ENCODE measurements at regions of chr4 and their contacts with region 1.

Region 1: GRCh38 chr4:139030614-139031235 is 15.1 kb downstream of the NOCT start:
- DNase-seq: peak; percentile 35 to 92 (median 70)
- ATAC-seq: peak; percentile 62 to 81 (median 75)
- H3K4me3 ChIP-seq: no peak overlapping the region
- H3K4me3 Mint-ChIP-seq: no peak overlapping the region
- H3K27ac ChIP-seq: no peak overlapping the region
- H3K27ac Mint-ChIP-seq: no peak overlapping the region
- H3K4me1 ChIP-seq: peaks cover 2 to 4% of the 10 kb centered on the region in 2 experiments
- H3K4me1 Mint-ChIP-seq: peaks cover 7 to 11% (median 9%) of the 10 kb centered on the region in 3 donors
- H3K27me3 ChIP-seq: no peaks in the 10 kb centered on the region
- H3K27me3 Mint-ChIP-seq: no peaks in the 10 kb centered on the region

Region 2: GRCh38 chr4:139015269-139015947 is 15.3 kb before region 1 on chr4 and contains the start of gene NOCT:
- CTCF ChIA-PET with region 1: interaction called, 7 to 31 read pairs
- POLR2A ChIA-PET with region 1: interaction called in 1 of 2 experiments, 4 read pairs
- DNase-seq: peak; percentile 72 to 96 (median 89)
- ATAC-seq: peak; percentile 91 to 97 (median 96)
- H3K4me3 ChIP-seq: peak within 1 kb of the TSS; percentile 68 to 71
- H3K4me3 Mint-ChIP-seq: peak within 1 kb of the TSS; percentile 82 to 94 (median 86)
- H3K27ac ChIP-seq: peak within 1 kb of the TSS; percentile 89
- H3K27ac Mint-ChIP-seq: peak within 1 kb of the TSS; percentile 92 to 96
- H3K4me1 ChIP-seq: peaks cover 10 to 16% of the 10 kb centered on the region in 2 experiments
- H3K4me1 Mint-ChIP-seq: peaks cover 19 to 26% (median 23%) of the 10 kb centered on the region in 3 donors
- H3K27me3 ChIP-seq: no peaks in the 10 kb centered on the region
- H3K27me3 Mint-ChIP-seq: no peaks in the 10 kb centered on the region
- total RNA-seq, gene NOCT: 2.4 to 19.3 (median 3.1) TPM

Region 3: DNA sequence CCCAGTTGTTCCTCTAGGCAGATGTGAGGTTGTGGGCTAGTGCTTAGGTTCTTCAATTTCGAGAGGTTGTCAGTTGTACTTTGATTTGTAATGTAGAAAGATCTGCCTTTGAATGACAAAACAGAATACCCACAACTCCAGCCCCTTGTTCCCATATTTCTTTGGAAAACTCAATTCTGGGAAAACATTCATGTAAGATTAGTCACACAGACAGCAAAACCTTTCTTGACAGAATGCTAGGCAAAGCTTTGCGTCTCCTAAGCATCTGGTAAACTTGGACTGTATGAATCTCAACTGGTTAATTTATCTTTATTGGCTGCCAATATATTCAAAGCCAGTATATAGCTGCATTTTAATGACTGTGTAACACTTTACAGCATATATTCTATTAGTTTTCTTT is 19.7 kb after region 1 on chr4:
- CTCF ChIA-PET with region 1: interaction called, 4 to 11 read pairs
- POLR2A ChIA-PET with region 1: interaction called in 1 of 2 experiments, 4 read pairs
- DNase-seq: no peak
- ATAC-seq: no peak
- H3K4me3 ChIP-seq: no peak overlapping the region
- H3K4me3 Mint-ChIP-seq: no peak overlapping the region
- H3K27ac ChIP-seq: no peak overlapping the region
- H3K27ac Mint-ChIP-seq: no peak overlapping the region
- H3K4me1 ChIP-seq: no peaks in the 10 kb centered on the region
- H3K4me1 Mint-ChIP-seq: peaks cover 8 to 19% (median 13%) of the 10 kb centered on the region in 3 donors
- H3K27me3 ChIP-seq: no peaks in the 10 kb centered on the region
- H3K27me3 Mint-ChIP-seq: no peaks in the 10 kb centered on the region

Region 4: DNA sequence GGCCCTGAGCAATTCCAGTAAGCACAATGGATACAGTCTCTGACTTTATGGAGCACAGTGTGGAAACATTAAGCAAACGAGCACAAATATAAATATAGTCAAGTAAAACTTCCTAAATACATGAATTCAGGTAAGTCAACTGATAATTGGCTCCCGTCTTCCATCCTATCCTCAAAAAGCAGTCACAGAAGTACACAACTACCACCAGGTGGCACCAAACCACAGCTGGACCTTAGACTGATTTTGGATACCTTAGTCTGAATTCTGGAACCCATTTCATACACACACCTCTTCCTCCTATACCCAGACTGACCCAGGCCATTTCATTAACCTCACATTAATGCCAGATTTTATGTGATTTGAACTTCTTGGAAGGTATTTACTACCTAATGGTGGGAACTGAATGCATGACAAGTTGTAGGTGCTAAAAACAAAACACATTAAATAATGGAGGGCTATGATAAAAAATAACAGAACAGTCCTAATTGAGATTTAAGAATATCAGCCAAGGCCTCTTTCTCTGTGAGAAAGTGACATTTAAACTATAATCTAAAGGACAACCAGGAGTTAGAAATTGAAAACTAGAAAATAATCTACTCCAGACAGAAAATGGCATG is 68.7 kb after region 1 on chr4:
- CTCF ChIA-PET with region 1: interaction called, 9 to 13 read pairs
- POLR2A ChIA-PET with region 1: no interaction called
- DNase-seq: peak; percentile 33 to 91 (median 63)
- ATAC-seq: peak; percentile 71 to 82 (median 78)
- H3K4me3 ChIP-seq: no peak overlapping the region
- H3K4me3 Mint-ChIP-seq: no peak overlapping the region
- H3K27ac ChIP-seq: no peak overlapping the region
- H3K27ac Mint-ChIP-seq: no peak overlapping the region
- H3K4me1 ChIP-seq: no peaks in the 10 kb centered on the region
- H3K4me1 Mint-ChIP-seq: peaks cover 2 to 9% (median 4%) of the 10 kb centered on the region in 3 donors
- H3K27me3 ChIP-seq: no peaks in the 10 kb centered on the region
- H3K27me3 Mint-ChIP-seq: no peaks in the 10 kb centered on the region

Region 5: DNA sequence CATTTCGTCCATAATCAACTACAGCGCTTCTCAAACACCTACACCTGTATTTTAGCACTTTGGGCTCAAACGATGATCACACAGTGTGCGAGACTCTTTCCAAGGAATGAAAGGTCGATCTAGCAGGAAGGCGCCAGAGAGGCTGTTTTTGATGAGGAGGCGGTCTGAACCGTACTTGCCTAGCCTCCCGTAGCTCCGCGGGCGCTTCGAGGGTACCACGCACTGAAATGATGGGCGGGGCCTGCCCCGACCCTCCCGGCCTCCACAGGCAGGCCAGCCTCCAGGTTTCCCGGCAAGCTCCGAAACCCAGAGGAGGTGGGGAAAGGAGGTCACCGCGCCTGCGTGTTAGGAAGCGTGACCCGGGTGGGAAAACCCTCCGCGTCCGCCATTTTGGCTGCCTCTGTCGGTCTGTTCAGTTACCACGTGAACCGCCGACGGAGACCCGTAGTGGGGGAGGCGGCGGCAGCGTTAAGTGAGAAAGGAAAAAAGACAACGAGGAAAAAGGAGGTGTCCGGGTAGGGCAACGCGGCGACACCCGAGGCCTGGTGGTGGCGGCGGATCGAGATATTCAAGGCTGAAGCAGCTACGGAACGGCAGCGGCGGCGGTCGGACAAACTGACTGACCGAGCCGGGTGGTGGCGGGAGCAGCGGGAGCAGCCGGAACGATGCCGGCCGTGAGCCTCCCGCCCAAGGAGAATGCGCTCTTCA is 270.5 kb after region 1 on chr4 and contains the start of gene NAA15:
- CTCF ChIA-PET with region 1: interaction called, 5 to 59 read pairs
- POLR2A ChIA-PET with region 1: no interaction called
- DNase-seq: peak; percentile 91 to 98 (median 97)
- ATAC-seq: peak; percentile 91 to 93 (median 93)
- H3K4me3 ChIP-seq: peak within 1 kb of the TSS; percentile 91 to 100
- H3K4me3 Mint-ChIP-seq: peak within 1 kb of the TSS; percentile 94 to 100 (median 100)
- H3K27ac ChIP-seq: peak within 1 kb of the TSS; percentile 98
- H3K27ac Mint-ChIP-seq: peak within 1 kb of the TSS; percentile 100
- H3K4me1 ChIP-seq: peaks cover 19 to 24% of the 10 kb centered on the region in 2 experiments
- H3K4me1 Mint-ChIP-seq: peaks cover 52 to 62% (median 61%) of the 10 kb centered on the region in 3 donors
- H3K27me3 ChIP-seq: no peaks in the 10 kb centered on the region
- H3K27me3 Mint-ChIP-seq: no peaks in the 10 kb centered on the region
- total RNA-seq, gene NAA15: 45.1 to 64.0 (median 50.7) TPM

Region 6: DNA sequence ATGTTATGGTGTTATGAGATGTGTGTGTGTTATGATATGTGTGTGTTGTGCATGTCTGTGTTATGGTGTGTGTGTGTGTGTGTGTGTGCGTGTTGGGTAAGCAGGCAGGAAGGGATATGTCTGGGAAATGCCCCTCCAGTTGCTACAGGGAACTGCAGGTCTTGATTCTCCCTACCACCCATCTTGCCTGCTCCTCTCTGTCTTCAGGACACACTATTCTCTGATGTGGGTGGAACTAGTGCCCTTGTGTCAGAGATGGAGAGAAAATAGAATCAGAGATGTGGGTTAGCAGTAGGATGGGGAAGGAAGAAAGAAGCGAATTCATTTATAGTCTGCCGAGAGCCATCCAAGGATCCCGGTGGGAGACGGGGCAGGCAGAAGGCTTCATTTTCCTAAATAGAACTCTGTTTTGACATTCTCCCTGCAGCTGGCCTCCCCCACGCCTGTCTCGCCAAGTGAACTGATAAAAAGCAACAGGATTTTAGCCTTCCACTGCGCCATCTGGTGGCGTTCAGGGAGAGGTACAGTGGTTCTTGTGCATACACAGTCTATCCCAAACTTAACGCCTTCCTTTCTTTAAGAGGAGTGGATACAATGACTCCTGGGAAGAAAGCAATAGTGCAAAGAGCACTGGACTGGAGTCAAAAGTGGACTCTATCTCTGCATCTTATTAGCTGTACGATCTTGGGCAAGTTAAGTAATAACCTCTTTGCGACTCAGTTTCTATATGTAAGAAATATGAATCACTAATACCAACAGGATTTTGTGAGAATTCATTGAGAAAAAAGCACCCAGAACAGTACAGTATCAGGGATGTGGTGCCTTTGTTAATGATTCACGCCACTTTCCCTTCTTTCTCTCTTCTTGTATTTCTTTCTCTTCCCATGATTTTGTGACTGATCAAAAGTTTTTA is 620.8 kb after region 1 on chr4:
- CTCF ChIA-PET with region 1: interaction called, 3 to 19 read pairs
- POLR2A ChIA-PET with region 1: no interaction called
- DNase-seq: peak; percentile 30 to 85 (median 60)
- ATAC-seq: peak; percentile 78 to 88 (median 83)
- H3K4me3 ChIP-seq: no peak overlapping the region
- H3K4me3 Mint-ChIP-seq: no peak overlapping the region
- H3K27ac ChIP-seq: no peak overlapping the region
- H3K27ac Mint-ChIP-seq: no peak overlapping the region
- H3K4me1 ChIP-seq: peaks cover 0 to 4% of the 10 kb centered on the region in 2 experiments
- H3K4me1 Mint-ChIP-seq: peaks cover 4 to 9% (median 7%) of the 10 kb centered on the region in 3 donors
- H3K27me3 ChIP-seq: peaks cover 0 to 6% of the 10 kb centered on the region in 2 experiments
- H3K27me3 Mint-ChIP-seq: peaks cover 3 to 6% of the 10 kb centered on the region in 2 donors

Measured in T-cell (primary cell).